Activated naive CD4-positive, alpha-beta T cell treated with anti-CD3 and anti-CD28 coated beads, Interleukin-2, amount 10 ng/mL, durations not matched to agents 7 days and 5 days (primary cell): ENCODE measurements at regions of chr1 and their contacts with region 1.

Region 1: DNA sequence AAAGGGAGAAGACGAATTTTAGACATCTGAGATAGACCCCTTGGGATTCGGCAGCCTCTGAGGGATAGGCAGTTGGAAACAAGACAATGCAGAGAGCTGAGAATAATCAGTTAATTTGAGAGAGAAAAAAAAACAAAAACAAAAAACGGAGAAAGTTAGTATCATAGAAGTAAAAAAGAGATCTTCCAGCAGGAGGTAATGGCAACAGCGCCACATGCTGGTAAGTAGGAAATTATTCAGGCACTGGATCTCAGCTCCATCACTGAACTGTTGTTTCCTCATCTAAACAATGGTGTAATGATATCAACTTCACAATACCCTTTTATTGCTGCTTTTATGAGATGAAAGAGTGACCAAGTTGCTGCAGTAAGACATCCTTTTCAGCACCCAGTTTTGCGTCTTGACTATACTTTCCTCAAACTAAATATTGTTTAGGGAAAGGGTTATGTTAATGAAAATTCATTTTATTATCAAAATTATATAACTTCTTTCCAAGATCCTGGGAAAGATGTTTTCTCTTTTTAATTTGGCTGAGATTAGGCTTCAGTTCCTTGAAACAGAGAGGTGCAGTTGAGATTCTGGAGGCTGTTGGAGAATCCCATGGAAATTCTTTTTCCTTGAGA is 91.4 kb upstream of the KCNA3 start:
- DNase-seq: peak; percentile 71
- H3K4me3 Mint-ChIP-seq: no peak overlapping the region
- H3K27ac Mint-ChIP-seq: no peak overlapping the region
- H3K4me1 Mint-ChIP-seq: peaks cover 13% of the 10 kb centered on the region
- H3K27me3 Mint-ChIP-seq: peaks cover 21% of the 10 kb centered on the region

Region 2: GRCh38 chr1:110554871-110555801 is 211.0 kb before region 1 on chr1:
- CTCF ChIA-PET with region 1: interaction called, 26 read pairs
- DNase-seq: peak; percentile 69
- H3K4me3 Mint-ChIP-seq: peak overlapping the region; percentile 17
- H3K27ac Mint-ChIP-seq: no peak overlapping the region
- H3K4me1 Mint-ChIP-seq: peaks cover 5% of the 10 kb centered on the region
- H3K27me3 Mint-ChIP-seq: peaks cover 93% of the 10 kb centered on the region

Region 3: GRCh38 chr1:110630839-110631663 is 135.1 kb before region 1 on chr1:
- CTCF ChIA-PET with region 1: interaction called, 46 read pairs
- DNase-seq: peak; percentile 91
- H3K4me3 Mint-ChIP-seq: no peak overlapping the region
- H3K27ac Mint-ChIP-seq: no peak overlapping the region
- H3K4me1 Mint-ChIP-seq: peaks cover 35% of the 10 kb centered on the region
- H3K27me3 Mint-ChIP-seq: no peaks in the 10 kb centered on the region

Region 4: DNA sequence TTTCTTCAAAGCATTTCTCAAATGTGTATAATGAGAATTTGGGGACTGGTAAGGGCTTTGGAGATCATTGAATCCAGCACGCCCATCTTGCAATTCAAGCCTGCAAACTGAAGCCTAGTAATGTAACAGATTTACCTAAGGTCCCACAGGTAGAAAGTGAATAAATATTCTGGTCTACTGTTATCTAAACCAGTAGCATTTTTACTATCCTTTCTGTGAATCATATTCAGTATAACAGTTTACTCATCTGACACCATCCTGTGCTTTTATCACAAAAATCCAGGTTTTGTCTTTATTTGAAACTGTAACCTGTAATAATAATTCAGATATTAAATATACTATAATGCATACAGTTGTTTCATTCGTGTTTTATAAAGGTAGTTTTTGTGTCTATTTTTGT is 108.8 kb before region 1 on chr1:
- CTCF ChIA-PET with region 1: no interaction called
- DNase-seq: no peak
- H3K4me3 Mint-ChIP-seq: no peak overlapping the region
- H3K27ac Mint-ChIP-seq: no peak overlapping the region
- H3K4me1 Mint-ChIP-seq: peaks cover 47% of the 10 kb centered on the region
- H3K27me3 Mint-ChIP-seq: no peaks in the 10 kb centered on the region

Region 5: GRCh38 chr1:110668549-110668948 is 97.6 kb before region 1 on chr1:
- CTCF ChIA-PET with region 1: interaction called, 24 read pairs
- DNase-seq: peak; percentile 25
- H3K4me3 Mint-ChIP-seq: peak overlapping the region; percentile 76
- H3K27ac Mint-ChIP-seq: peak overlapping the region; percentile 92
- H3K4me1 Mint-ChIP-seq: peaks cover 19% of the 10 kb centered on the region
- H3K27me3 Mint-ChIP-seq: peaks cover 5% of the 10 kb centered on the region

Region 6: DNA sequence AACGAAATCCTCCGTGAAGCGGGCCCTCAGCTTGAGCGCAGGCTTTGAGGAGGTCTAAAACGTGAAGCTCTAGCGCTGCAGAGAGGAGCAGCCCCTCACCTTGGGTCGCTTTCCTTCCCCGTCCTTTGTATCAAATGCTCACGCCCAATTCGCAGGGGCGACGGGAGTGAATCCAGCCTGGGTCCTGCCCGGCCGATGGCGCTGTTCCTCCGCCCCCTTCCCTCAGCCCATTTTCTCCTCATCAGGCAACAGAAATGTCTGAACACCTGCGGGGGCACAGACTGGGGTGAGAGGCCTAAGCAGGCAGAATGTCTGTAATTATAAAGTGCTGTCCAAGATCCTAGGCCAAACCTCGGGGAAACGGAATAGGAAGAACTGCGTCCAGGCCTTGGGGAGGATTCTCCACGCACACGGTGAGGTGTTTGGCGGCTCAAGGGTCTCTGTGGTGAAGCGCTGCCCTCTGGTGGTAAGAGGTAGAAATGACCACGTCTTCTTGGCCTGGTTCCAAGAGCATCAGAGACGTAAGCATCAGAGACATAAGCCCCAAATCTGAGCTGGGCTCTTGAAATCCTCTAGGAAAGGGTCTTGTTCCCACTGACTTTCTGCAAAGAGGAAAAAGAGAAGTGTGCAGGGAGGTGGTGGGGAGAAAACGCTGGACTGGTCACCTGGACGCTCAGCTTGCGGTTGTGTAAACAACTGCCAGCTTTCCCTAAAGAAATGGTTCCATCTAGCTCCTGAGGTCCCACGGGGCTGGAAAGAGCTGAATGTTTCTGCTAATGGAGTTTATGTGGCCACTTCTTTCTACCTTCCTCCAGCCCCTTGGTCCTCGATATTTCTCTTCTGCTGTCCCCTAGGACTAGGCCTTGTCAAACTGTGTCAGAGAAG is 14.7 kb after region 1 on chr1:
- CTCF ChIA-PET with region 1: interaction called, 63 read pairs
- DNase-seq: peak; percentile 83
- H3K4me3 Mint-ChIP-seq: no peak overlapping the region
- H3K27ac Mint-ChIP-seq: peak overlapping the region; percentile 26
- H3K4me1 Mint-ChIP-seq: peaks cover 41% of the 10 kb centered on the region
- H3K27me3 Mint-ChIP-seq: peaks cover 41% of the 10 kb centered on the region

Region 7: DNA sequence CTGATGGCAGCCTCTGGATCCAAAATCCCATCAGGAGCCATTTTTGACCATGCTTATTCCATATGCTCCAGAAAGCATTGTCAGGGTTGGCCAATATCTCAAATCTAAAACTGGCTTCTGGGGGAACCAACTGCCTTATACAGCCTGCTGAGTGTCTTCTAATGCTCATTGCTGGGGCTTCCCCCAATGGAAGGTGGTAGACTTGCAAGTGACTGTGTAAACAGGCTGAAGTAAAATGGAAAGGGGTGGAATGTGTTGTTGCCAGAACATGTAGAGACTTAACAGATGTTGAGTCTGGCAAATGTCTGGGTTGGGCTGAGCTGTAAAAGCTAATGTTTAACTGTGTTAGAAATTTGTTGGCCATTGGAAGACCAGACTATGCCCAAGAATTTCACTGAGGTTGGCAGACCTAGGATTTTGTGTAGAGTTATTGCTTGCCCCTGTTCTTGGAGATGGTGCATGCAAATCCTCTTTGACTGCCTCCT is 220.3 kb after region 1 on chr1:
- CTCF ChIA-PET with region 1: interaction called, 10 read pairs
- DNase-seq: no peak
- H3K4me3 Mint-ChIP-seq: no peak overlapping the region
- H3K27ac Mint-ChIP-seq: no peak overlapping the region
- H3K4me1 Mint-ChIP-seq: peaks cover 14% of the 10 kb centered on the region
- H3K27me3 Mint-ChIP-seq: peaks cover 4% of the 10 kb centered on the region